ENCODE measurements at regions of chr9 and their contacts with region 1.

Region 1: DNA sequence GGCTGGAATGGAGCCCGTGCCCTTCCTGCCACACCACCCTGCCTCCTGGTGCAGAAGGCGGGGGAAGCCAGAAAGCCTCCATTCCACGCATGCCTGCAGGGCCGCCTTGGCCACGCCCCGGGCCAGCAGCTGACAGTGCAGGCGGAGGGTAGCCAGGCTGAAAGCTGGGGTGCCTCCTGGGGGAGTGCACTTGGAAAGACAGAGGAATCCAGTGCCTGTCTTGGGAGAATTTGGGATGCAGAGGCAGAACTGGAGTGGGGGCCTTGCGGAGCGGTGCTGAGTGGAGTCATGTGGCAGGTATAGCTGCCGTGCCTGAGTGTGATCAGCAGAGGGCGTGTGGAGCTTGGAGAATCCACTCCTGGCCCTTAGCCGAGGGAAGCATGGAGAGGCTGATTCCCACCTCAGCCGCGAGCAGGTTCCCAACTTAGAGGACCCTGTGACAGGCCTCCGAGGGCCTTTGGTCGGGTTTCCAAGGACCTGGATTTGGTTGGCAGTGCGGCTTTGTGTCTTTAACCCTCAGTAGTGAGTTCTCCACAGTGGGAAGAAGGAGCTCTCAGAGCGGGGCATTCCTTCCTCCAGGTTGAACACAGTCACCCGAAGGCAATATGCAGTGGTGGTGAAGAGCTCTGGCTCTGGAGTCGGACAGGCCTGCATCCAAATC is 9.1 kb upstream of the URM1 start:
- ATAC-seq: peak; percentile 69 to 87 (median 74)
- H3K4me3 ChIP-seq: no peak overlapping the region
- H3K27ac ChIP-seq: peak overlapping the region; percentile 21 to 49
- H3K4me1 ChIP-seq: peaks cover 21 to 33% of the 10 kb centered on the region in 2 donors

Region 2: DNA sequence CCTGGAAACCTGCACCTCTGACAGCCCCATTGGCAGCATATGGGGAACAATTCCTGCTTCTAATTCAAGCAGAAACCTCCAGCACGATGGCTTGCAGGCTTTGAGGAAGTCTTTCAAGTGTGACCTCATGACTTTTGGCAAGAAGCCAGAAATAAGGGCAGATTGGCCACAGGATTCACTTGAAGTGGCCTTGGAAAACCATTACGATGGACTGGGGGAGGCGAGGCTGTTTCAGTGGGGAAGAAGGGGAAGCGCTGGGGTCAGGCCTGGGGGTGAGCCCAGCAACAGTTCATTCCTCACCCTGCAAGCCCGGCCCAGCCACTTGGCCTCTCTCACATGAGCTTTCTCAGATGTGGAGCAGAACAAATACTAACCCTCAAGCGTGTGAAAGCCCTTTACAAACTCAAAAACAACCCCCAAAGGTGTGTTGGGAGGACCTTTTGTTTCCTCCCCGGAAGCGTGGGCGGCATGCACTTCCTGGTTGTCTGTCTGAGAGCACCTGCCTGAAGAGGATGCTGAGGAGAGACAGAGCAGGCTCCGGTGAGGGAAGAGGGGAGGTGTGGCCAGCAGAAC is 354.5 kb before region 1 on chr9:
- in situ Hi-C with region 1: no loop called
- ATAC-seq: peak in 2 of 8 experiments; percentile 45 to 59
- H3K4me3 ChIP-seq: no peak overlapping the region
- H3K27ac ChIP-seq: peak overlapping the region in 1 of 2 donors; percentile 71
- H3K4me1 ChIP-seq: peaks cover 16 to 31% of the 10 kb centered on the region in 2 donors

Region 3: GRCh38 chr9:128412120-128412790 is 50.1 kb after region 1 on chr9:
- in situ Hi-C with region 1: loop called in 3 of 9 experiments (anchors 10 kb)
- ATAC-seq: peak; percentile 52 to 80 (median 75)
- H3K4me3 ChIP-seq: no peak overlapping the region
- H3K27ac ChIP-seq: no peak overlapping the region
- H3K4me1 ChIP-seq: peaks cover 38% of the 10 kb centered on the region in 2 donors

Measured in motor neuron (in vitro differentiated cells).